T-cell (primary cell): ENCODE measurements at regions of chr3 and their contacts with region 1.

Region 1: GRCh38 chr3:121749276-121750086 is at the start of gene GOLGB1:
- DNase-seq: peak; percentile 77 to 98 (median 92)
- ATAC-seq: peak; percentile 94 to 98 (median 96)
- H3K4me3 ChIP-seq: peak within 1 kb of the TSS; percentile 98 to 100
- H3K4me3 Mint-ChIP-seq: peak within 1 kb of the TSS in 2 of 3 donors; percentile 22 to 54
- H3K27ac ChIP-seq: peak within 1 kb of the TSS; percentile 97
- H3K27ac Mint-ChIP-seq: no peak within 1 kb of the TSS
- H3K4me1 ChIP-seq: peaks cover 14 to 23% of the 10 kb centered on the region in 2 experiments
- H3K4me1 Mint-ChIP-seq: peaks cover 5 to 15% (median 8%) of the 10 kb centered on the region in 3 donors
- H3K27me3 ChIP-seq: peaks cover 0 to 2% of the 10 kb centered on the region in 2 experiments
- H3K27me3 Mint-ChIP-seq: peaks cover 10 to 12% of the 10 kb centered on the region in 2 donors
- total RNA-seq, gene GOLGB1: 33.5 to 47.0 (median 40.1) TPM

Region 2: GRCh38 chr3:121654493-121655385 is 94.7 kb before region 1 on chr3:
- CTCF ChIA-PET with region 1: interaction called in 1 of 2 experiments, 11 read pairs
- POLR2A ChIA-PET with region 1: interaction called in 1 of 2 experiments, 6 read pairs
- DNase-seq: peak in 1 of 35 experiments; percentile 41
- ATAC-seq: peak; percentile 78 to 88 (median 85)
- H3K4me3 ChIP-seq: peak overlapping the region in 1 of 2 donors; percentile 33
- H3K4me3 Mint-ChIP-seq: peak overlapping the region; percentile 26 to 57 (median 44)
- H3K27ac ChIP-seq: peak overlapping the region; percentile 59
- H3K27ac Mint-ChIP-seq: peak overlapping the region; percentile 86 to 93
- H3K4me1 ChIP-seq: peaks cover 19 to 54% of the 10 kb centered on the region in 2 experiments
- H3K4me1 Mint-ChIP-seq: peaks cover 75 to 91% (median 89%) of the 10 kb centered on the region in 3 donors
- H3K27me3 ChIP-seq: no peaks in the 10 kb centered on the region
- H3K27me3 Mint-ChIP-seq: no peaks in the 10 kb centered on the region

Region 3: DNA sequence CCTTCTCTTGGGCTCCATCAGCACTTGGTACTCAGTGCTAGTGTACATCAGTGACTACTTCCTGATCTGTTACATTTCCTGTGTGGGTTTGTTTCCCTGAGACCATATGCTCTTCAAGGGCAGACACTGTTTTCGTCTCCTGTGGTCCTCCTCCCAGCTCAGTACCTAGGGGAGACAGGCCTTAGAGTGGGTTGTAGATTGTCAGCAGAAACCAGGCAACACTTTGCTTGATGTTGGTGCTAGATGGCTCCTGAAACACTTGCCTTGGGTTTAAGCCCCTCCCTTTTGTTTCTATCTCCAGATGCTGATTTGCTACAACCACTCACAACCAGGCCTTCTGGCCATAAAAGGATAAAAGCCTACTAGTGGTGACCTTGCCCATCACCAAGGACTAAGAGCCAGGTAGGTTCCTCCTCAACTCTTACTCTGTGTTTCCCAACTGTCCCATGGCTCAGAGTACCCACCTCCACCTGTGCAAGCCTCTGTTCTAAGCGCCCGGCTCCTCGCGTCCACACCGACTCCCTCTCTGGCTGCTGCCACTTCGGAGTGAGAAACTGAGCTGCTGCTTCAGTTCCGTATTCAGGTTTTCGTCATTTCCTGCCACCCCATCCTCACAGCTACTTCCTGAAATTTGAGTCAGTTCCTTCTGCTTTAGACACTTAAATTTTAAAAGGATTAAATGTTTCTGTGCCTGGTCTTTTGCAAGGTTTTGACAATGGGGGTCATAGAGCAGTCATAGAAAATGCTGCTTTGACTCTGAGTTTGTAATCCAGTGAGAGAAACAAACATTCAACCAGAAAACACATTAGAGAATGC is 88.9 kb before region 1 on chr3 and contains the start of gene HCLS1:
- CTCF ChIA-PET with region 1: interaction called in 1 of 2 experiments, 11 read pairs
- POLR2A ChIA-PET with region 1: interaction called, 6 to 15 read pairs
- DNase-seq: peak; percentile 48 to 85 (median 67)
- ATAC-seq: peak; percentile 84 to 87 (median 85)
- H3K4me3 ChIP-seq: peak within 1 kb of the TSS; percentile 69 to 77
- H3K4me3 Mint-ChIP-seq: peak within 1 kb of the TSS; percentile 82 to 98 (median 95)
- H3K27ac ChIP-seq: peak within 1 kb of the TSS; percentile 97
- H3K27ac Mint-ChIP-seq: peak within 1 kb of the TSS; percentile 99
- H3K4me1 ChIP-seq: peaks cover 18 to 41% of the 10 kb centered on the region in 2 experiments
- H3K4me1 Mint-ChIP-seq: peaks cover 57 to 61% (median 59%) of the 10 kb centered on the region in 3 donors
- H3K27me3 ChIP-seq: no peaks in the 10 kb centered on the region
- H3K27me3 Mint-ChIP-seq: no peaks in the 10 kb centered on the region
- total RNA-seq, gene HCLS1: 280 to 329 (median 321) TPM

Region 4: DNA sequence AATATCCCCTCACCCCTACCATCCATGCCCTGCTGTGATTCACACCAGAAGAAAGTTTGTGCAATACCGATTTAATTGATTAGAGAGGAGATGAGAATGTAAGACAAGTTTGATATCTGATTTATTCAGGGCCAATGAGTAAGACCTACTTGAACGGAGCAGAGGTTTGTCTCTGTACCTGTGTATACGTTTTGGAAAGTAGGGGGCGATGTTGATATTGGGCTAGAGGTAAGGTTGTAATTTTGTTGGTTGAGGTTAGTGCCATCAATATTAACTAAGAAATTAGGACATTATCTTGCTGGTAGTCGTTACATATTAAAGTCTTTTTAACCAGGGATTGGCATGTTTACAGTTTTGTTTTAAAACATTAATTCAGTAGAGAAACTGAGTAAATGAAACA is 106.1 kb after region 1 on chr3:
- CTCF ChIA-PET with region 1: no interaction called
- POLR2A ChIA-PET with region 1: no interaction called
- DNase-seq: peak in 1 of 35 experiments; percentile 13
- ATAC-seq: no peak
- H3K4me3 ChIP-seq: no peak overlapping the region
- H3K4me3 Mint-ChIP-seq: no peak overlapping the region
- H3K27ac ChIP-seq: no peak overlapping the region
- H3K27ac Mint-ChIP-seq: no peak overlapping the region
- H3K4me1 ChIP-seq: no peaks in the 10 kb centered on the region
- H3K4me1 Mint-ChIP-seq: peaks cover 0 to 6% (median 0%) of the 10 kb centered on the region in 3 donors
- H3K27me3 ChIP-seq: no peaks in the 10 kb centered on the region
- H3K27me3 Mint-ChIP-seq: no peaks in the 10 kb centered on the region